ENCODE measurements at regions of chr12 and their contacts with region 1.

Region 1: DNA sequence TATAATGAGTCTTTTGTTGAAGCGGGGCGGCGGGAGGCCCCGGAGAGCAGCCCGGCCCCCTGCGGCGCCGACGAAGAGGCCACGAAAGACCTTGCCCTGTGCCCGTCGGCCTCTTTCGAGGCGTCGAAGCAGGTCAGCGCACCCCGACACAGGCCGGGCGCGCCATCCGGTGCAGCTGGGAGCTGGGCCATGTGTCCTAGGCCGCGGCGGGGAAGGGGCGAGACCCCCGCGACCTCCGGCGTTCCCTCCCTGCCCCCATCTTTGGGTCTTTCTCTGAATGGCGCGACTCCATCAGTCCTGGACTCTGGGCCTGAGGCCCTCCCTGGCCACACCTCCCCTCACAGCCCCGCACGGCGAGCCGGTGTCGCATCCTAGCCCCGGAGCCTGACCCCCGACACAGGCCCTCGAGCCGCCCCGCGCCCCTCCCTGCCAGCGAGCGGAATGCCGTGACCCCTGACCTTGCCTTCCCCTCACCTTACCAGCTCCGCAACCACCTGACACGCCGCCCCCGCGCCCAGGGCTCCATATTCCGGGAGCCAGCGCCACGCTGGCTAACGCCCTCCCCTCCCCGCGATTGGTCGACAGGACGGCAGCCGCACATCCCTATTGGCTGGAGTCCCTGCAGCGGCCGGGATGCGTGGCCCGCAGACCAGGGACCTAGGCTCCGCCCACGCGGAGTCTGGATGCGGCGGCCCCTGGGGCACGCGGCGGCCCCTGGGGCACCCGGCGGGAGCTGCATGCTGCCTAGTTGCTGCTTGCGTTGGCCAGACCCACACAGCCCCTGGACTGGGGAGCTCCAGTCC is at the start of gene SLC11A2:
- DNase-seq: peak; percentile 97
- ATAC-seq: peak; percentile 88
- H3K4me3 Mint-ChIP-seq: peak within 1 kb of the TSS; percentile 93
- H3K27ac Mint-ChIP-seq: peak within 1 kb of the TSS; percentile 98
- H3K4me1 Mint-ChIP-seq: peaks cover 55% of the 10 kb centered on the region
- H3K27me3 Mint-ChIP-seq: no peaks in the 10 kb centered on the region
- total RNA-seq, gene SLC11A2: 31.0 to 32.9 TPM

Region 2: DNA sequence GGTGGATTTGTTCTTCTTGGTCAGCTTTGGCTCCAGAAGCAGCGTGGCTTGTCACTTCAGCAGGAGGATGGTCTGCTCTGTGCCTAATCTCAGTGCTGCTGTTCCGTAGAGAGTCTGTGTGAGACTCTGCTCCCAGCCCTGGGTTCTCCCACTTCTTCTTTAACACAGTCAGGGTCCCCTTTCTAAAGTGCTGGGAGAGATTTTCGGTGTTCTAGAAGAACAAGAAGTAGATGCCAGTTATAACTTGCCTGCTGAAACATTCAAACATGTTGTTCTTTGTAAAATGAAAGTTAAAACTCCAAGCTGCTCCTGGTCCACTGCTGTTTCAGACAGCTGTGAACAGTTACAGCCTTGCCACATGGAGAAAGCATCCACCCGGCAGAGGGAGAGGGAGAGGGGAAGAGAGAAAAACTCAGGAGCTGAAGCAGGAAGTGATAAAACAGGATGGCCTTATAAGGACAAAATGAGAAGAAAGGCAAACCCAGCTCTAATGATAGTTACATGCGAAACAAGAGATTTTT is 803.7 kb before region 1 on chr12:
- CTCF ChIA-PET with region 1: no interaction called
- POLR2A ChIA-PET with region 1: no interaction called
- intact Hi-C with region 1: loop called in 1 of 2 experiments (anchors 10 kb)
- DNase-seq: peak; percentile 48
- ATAC-seq: peak; percentile 21
- H3K4me3 Mint-ChIP-seq: no peak overlapping the region
- H3K27ac Mint-ChIP-seq: no peak overlapping the region
- H3K4me1 Mint-ChIP-seq: peaks cover 40% of the 10 kb centered on the region
- H3K27me3 Mint-ChIP-seq: no peaks in the 10 kb centered on the region

Region 3: GRCh38 chr12:50533203-50533584 is 492.8 kb before region 1 on chr12:
- CTCF ChIA-PET with region 1: no interaction called
- POLR2A ChIA-PET with region 1: no interaction called
- intact Hi-C with region 1: loop called in 1 of 2 experiments (anchors 5 kb)
- DNase-seq: no peak
- ATAC-seq: peak; percentile 11
- H3K4me3 Mint-ChIP-seq: no peak overlapping the region
- H3K27ac Mint-ChIP-seq: no peak overlapping the region
- H3K4me1 Mint-ChIP-seq: peaks cover 31% of the 10 kb centered on the region
- H3K27me3 Mint-ChIP-seq: no peaks in the 10 kb centered on the region

Region 4: DNA sequence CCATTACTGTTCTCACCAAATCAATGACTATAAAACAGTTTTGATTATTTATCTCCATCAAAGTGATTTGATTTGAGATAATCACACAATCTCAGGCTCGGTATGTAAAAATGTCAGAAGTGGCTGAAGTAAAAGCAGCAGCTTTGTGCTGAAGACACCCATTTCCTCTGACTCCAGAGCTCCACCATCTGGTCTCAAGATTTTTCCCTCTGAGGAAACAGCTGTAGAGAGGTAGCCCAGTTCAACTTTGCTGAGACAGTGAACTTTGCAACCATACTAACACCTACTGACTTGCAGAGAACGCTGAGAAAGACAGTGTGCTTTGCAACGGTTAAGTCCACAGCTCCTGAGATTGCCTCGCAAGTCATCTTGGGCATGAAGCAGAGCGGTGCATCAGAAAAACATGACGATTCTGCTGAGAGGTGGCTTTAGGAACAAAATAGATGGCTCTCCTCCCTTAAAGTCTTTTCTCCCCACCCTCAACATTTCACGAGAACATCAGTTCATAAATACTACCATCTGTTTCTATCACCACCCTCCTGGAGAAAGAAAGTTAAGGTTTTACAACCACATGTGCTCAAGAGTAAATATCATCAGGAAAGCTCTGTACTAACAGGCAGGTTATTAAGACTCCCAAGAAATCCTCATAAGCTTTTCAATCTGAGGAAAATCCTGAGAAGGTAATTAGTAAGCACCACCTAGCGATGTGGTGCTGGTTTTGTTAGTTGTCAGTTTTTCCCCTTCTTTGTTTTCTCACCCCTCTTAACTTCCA is 38.9 kb before region 1 on chr12:
- CTCF ChIA-PET with region 1: interaction called, 8 read pairs
- POLR2A ChIA-PET with region 1: interaction called, 9 read pairs
- intact Hi-C with region 1: loop called (anchors 1 to 2 kb)
- DNase-seq: peak; percentile 46
- ATAC-seq: peak; percentile 60
- H3K4me3 Mint-ChIP-seq: no peak overlapping the region
- H3K27ac Mint-ChIP-seq: peak overlapping the region; percentile 38
- H3K4me1 Mint-ChIP-seq: peaks cover 57% of the 10 kb centered on the region
- H3K27me3 Mint-ChIP-seq: no peaks in the 10 kb centered on the region

Region 5: GRCh38 chr12:51047655-51048540 is 21.9 kb after region 1 on chr12 and contains the start of gene LETMD1:
- CTCF ChIA-PET with region 1: interaction called, 5 read pairs
- POLR2A ChIA-PET with region 1: interaction called, 4 read pairs
- intact Hi-C with region 1: loop called (anchors 1 kb)
- DNase-seq: peak; percentile 94
- ATAC-seq: peak; percentile 98
- H3K4me3 Mint-ChIP-seq: peak within 1 kb of the TSS; percentile 92
- H3K27ac Mint-ChIP-seq: peak within 1 kb of the TSS; percentile 92
- H3K4me1 Mint-ChIP-seq: peaks cover 23% of the 10 kb centered on the region
- H3K27me3 Mint-ChIP-seq: no peaks in the 10 kb centered on the region
- total RNA-seq, gene LETMD1: 69.6 to 79.6 TPM

Region 6: GRCh38 chr12:51131745-51132521 is 105.9 kb after region 1 on chr12:
- CTCF ChIA-PET with region 1: no interaction called
- POLR2A ChIA-PET with region 1: interaction called, 15 read pairs
- intact Hi-C with region 1: no loop called
- DNase-seq: no peak
- ATAC-seq: no peak
- H3K4me3 Mint-ChIP-seq: no peak overlapping the region
- H3K27ac Mint-ChIP-seq: no peak overlapping the region
- H3K4me1 Mint-ChIP-seq: peaks cover 11% of the 10 kb centered on the region
- H3K27me3 Mint-ChIP-seq: no peaks in the 10 kb centered on the region

Region 7: DNA sequence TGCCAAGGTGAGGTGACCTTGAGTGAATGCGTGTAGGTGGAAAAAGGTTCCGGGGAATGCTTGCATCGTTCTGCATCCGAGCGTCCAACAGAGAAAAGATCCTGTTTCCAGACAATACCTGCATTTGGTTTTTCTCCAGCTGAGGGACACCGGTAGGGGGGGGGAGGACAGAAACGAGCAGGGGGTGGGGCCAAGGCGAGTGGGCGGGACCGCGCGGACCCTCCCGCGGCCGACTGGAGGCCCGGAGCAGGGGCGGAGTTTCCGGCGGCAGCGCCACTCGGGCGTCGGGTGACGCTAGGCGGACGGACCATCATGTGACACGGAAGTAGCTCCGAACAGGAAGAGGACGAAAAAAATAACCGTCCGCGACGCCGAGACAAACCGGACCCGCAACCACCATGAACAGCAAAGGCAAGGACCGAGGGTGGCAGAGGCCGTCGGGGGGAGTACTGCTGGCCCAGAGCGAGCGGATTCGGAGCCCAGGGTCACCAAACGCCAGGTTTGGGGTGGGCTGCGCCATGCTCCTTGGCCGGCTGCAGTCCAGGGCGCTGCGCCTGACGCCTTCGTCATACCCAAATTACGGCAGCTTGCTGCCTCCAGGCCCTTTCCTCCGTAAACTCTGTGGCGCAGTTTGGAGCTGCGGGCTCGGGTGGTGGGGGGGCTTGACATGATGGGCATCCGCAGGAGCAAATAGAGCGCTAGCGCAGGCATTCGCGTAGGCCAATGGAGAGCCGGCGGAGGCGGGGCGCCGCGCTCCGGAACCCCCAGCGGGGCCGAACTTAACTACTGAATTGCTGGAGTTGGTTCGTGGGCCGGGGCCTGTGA is 212.7 kb after region 1 on chr12 and contains the start of gene DAZAP2:
- CTCF ChIA-PET with region 1: no interaction called
- POLR2A ChIA-PET with region 1: interaction called, 3 read pairs
- intact Hi-C with region 1: loop called in 1 of 2 experiments (anchors 1 kb)
- DNase-seq: peak; percentile 98
- ATAC-seq: peak; percentile 92
- H3K4me3 Mint-ChIP-seq: peak within 1 kb of the TSS; percentile 87
- H3K27ac Mint-ChIP-seq: peak within 1 kb of the TSS; percentile 100
- H3K4me1 Mint-ChIP-seq: peaks cover 36% of the 10 kb centered on the region
- H3K27me3 Mint-ChIP-seq: no peaks in the 10 kb centered on the region
- total RNA-seq, gene DAZAP2: 94.8 to 95.2 TPM

Measured in activated CD4-positive, alpha-beta T cell treated with anti-CD3 and anti-CD28 coated beads for 36 hours (primary cell).